ENCODE measurements at regions of chr5 and their contacts with region 1.

Region 1: GRCh38 chr5:52799983-52800393 is 12.3 kb downstream of the ITGA1 start:
- DNase-seq: peak; percentile 87 to 97 (median 96)
- ATAC-seq: peak; percentile 87
- H3K4me3 ChIP-seq: peak overlapping the region; percentile 81 to 89
- H3K4me3 Mint-ChIP-seq: peak overlapping the region; percentile 97
- H3K27ac ChIP-seq: peak overlapping the region; percentile 70 to 72
- H3K27ac Mint-ChIP-seq: peak overlapping the region; percentile 96
- H3K4me1 ChIP-seq: peaks cover 33% of the 10 kb centered on the region
- H3K4me1 Mint-ChIP-seq: peaks cover 68% of the 10 kb centered on the region
- H3K27me3 ChIP-seq: no peaks in the 10 kb centered on the region
- H3K27me3 Mint-ChIP-seq: no peaks in the 10 kb centered on the region
- CTCF ChIP-seq: no peak

Region 2: GRCh38 chr5:52424401-52424800 is 375.6 kb before region 1 on chr5:
- CTCF ChIA-PET with region 1: no interaction called
- POLR2A ChIA-PET with region 1: no interaction called
- intact Hi-C with region 1: no loop called
- DNase-seq: no peak
- ATAC-seq: no peak
- H3K4me3 ChIP-seq: no peak overlapping the region
- H3K4me3 Mint-ChIP-seq: no peak overlapping the region
- H3K27ac ChIP-seq: no peak overlapping the region
- H3K27ac Mint-ChIP-seq: no peak overlapping the region
- H3K4me1 ChIP-seq: no peaks in the 10 kb centered on the region
- H3K4me1 Mint-ChIP-seq: no peaks in the 10 kb centered on the region
- H3K27me3 ChIP-seq: no peaks in the 10 kb centered on the region
- H3K27me3 Mint-ChIP-seq: peaks cover 2% of the 10 kb centered on the region
- CTCF ChIP-seq: no peak

Region 3: GRCh38 chr5:52743970-52744369 is 56.0 kb before region 1 on chr5:
- CTCF ChIA-PET with region 1: interaction called, 5 read pairs
- POLR2A ChIA-PET with region 1: interaction called, 5 read pairs
- intact Hi-C with region 1: loop called in 1 of 2 experiments (anchors 2 kb)
- DNase-seq: peak in 8 of 9 experiments; percentile 22 to 74 (median 53)
- ATAC-seq: peak; percentile 91
- H3K4me3 ChIP-seq: no peak overlapping the region
- H3K4me3 Mint-ChIP-seq: peak overlapping the region; percentile 9
- H3K27ac ChIP-seq: peak overlapping the region in 1 of 2 experiments; percentile 21
- H3K27ac Mint-ChIP-seq: peak overlapping the region; percentile 90
- H3K4me1 ChIP-seq: peaks cover 43% of the 10 kb centered on the region
- H3K4me1 Mint-ChIP-seq: peaks cover 73% of the 10 kb centered on the region
- H3K27me3 ChIP-seq: no peaks in the 10 kb centered on the region
- H3K27me3 Mint-ChIP-seq: no peaks in the 10 kb centered on the region
- CTCF ChIP-seq: no peak

Region 4: DNA sequence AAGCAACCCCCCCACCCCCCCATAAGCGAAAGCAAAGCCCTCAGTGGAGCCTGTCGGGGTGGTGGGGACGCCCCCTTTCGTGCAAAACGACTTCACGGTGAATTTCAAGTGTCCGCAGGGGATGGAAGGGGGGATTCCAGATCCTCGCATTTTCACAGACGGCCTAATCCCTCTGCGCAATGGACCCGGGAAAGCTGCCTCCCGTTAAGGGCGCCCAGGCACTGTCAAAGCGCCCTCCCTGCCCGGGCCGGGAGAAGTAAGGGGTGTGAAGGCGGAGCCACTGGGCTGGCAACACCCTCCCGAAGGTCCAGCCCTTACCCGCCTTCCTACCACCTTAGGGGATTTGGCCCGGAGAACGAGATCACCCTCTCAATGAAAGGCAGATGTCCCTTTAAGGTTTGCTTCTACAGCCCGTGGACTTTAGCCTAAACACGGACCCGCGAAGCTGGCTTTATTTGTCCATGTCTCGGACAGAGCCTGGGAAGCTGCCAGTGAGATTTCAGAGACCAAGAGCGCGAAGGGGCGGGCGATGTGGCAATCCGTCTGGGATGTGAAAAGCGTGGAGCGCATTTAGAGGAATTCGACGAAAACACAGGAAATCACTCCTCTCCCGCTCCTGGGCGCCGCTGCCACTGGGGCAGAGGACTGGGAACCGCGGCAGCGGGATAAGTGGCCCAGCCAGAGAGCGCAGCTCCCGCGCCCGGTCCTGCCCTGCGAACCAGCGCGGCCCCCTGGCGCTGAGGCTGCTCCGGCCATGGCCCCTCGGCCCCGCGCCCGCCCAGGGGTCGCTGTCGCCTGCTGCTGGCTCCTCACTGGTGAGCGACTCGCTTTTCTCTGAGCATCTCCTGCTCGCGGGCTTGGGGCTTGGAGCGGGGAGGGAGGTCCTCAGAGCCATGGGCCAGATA is 12.1 kb before region 1 on chr5 and contains the starts of genes ITGA1 and PELO:
- CTCF ChIA-PET with region 1: interaction called, 25 read pairs
- POLR2A ChIA-PET with region 1: interaction called, 19 read pairs
- intact Hi-C with region 1: loop called in 1 of 2 experiments (anchors 1 kb)
- DNase-seq: peak in 8 of 9 experiments; percentile 21 to 81 (median 60)
- ATAC-seq: peak; percentile 79
- H3K4me3 ChIP-seq: peak within 1 kb of the TSS; percentile 69 to 83
- H3K4me3 Mint-ChIP-seq: peak within 1 kb of the TSS; percentile 94
- H3K27ac ChIP-seq: peak within 1 kb of the TSS in 1 of 2 experiments; percentile 35
- H3K27ac Mint-ChIP-seq: peak within 1 kb of the TSS; percentile 87
- H3K4me1 ChIP-seq: peaks cover 8% of the 10 kb centered on the region
- H3K4me1 Mint-ChIP-seq: peaks cover 39% of the 10 kb centered on the region
- H3K27me3 ChIP-seq: peaks cover 0 to 4% of the 10 kb centered on the region in 2 experiments
- H3K27me3 Mint-ChIP-seq: no peaks in the 10 kb centered on the region
- CTCF ChIP-seq: peak; percentile 36
- total RNA-seq, gene ITGA1: 4.6 to 7.3 TPM
- total RNA-seq, gene PELO: 13.4 to 13.7 TPM

Region 5: GRCh38 chr5:53109443-53110127 is 309.6 kb after region 1 on chr5 and contains the start of gene MOCS2:
- CTCF ChIA-PET with region 1: no interaction called
- POLR2A ChIA-PET with region 1: interaction called, 3 read pairs
- intact Hi-C with region 1: loop called (anchors 1 to 2 kb)
- DNase-seq: peak; percentile 73 to 95 (median 90)
- ATAC-seq: peak; percentile 97
- H3K4me3 ChIP-seq: peak within 1 kb of the TSS; percentile 59 to 85
- H3K4me3 Mint-ChIP-seq: peak within 1 kb of the TSS; percentile 96
- H3K27ac ChIP-seq: peak within 1 kb of the TSS; percentile 62 to 75
- H3K27ac Mint-ChIP-seq: peak within 1 kb of the TSS; percentile 93
- H3K4me1 ChIP-seq: peaks cover 34% of the 10 kb centered on the region
- H3K4me1 Mint-ChIP-seq: peaks cover 55% of the 10 kb centered on the region
- H3K27me3 ChIP-seq: no peaks in the 10 kb centered on the region
- H3K27me3 Mint-ChIP-seq: no peaks in the 10 kb centered on the region
- CTCF ChIP-seq: no peak
- total RNA-seq, gene MOCS2: 16.5 to 18.2 TPM